Ascending aorta (tissue), 2 donors: ENCODE measurements at regions of chr3 and their contacts with region 1.

Region 1: DNA sequence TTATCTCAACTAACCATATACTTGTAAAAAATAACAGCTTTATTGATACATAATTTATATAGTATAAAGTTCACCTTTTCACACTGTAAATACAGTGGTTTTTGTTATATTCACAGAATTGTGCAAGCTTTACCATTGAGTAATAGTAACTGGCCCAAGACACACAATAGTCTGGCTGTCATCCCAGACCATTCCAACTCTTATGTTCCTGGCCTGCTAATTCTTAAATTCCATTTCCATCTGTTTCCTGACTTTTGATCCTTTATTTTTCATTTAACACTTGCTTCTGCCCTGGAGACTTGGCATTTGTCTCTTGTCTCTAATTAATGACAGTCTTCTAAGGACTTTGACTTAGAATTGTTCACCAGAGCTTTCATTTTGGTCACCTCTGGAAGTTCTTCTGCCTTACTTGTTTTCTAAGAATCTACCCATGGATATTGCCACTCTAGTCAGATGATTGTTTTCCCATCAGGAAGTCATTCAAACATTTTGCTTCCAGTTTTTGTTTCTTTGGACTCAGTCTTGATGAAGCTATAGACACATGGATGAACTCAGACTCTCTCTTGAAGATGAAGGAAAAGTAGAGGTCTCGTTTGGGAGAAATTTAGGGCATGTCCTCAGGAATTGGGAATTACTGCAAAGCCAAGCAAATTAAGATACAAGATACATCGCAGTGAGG is 27.2 kb upstream of the PLSCR4 start:
- DNase-seq: peak in 1 of 2 donors; percentile 66
- H3K4me3 ChIP-seq: no peak overlapping the region
- H3K27ac ChIP-seq: peak overlapping the region; percentile 78 to 82
- H3K4me1 ChIP-seq: peaks cover 9 to 58% of the 10 kb centered on the region in 2 donors
- H3K27me3 ChIP-seq: no peaks in the 10 kb centered on the region
- CTCF ChIP-seq: no peak

Region 2: GRCh38 chr3:146241523-146242240 is 36.4 kb before region 1 on chr3:
- intact Hi-C with region 1: loop called (anchors 5 kb)
- DNase-seq: peak; percentile 45 to 83
- H3K4me3 ChIP-seq: peak overlapping the region; percentile 16 to 27
- H3K27ac ChIP-seq: peak overlapping the region; percentile 90 to 93
- H3K4me1 ChIP-seq: peaks cover 0 to 7% of the 10 kb centered on the region in 2 donors
- H3K27me3 ChIP-seq: no peaks in the 10 kb centered on the region
- CTCF ChIP-seq: no peak

Region 3: DNA sequence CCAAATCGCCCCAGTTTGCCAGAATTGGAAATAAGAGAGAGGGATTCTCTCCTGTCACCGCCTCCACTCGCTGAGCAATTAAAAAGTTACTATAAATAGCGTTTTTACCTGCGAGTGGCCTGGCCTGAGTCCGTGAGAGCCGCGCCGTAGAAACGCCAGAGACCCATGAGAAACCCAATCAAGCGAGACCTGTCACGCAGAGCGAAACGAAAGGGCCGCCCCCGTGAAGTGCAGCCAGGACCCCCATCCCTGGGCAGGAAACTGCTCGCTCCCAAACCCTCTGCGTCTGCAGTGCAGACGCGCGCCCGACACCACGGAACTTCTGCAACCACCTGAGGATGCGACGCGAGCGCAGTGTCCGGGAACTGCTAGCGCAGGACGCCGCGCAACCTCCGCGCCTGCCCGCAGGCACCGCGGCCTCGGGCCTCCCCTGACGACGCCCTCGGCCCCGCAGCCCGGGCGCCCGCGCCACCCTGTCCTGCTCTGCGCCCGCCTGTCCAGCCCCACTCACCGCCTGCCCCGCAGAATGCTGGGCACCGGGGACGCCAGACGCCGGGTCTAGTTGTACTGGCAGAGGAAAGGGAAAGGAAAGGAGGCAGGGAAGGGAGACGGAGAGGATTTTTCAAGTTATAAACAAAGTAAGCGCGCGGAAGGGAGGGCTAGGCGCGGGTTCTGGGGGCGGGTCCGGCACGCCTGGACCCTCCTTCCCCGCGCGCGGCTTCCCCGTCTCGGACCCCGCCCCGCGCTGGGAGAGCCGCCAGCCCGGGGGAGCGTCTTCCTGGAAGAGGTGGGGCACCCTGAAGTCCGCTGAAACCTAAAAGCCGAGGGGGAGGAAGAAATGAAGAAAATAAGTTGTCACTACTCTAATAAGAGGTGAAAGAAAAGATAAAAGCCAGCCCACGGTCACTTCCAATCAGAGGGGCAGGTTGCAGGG is 27.4 kb before region 1 on chr3 and contains the start of gene PLSCR4:
- intact Hi-C with region 1: loop called (anchors 2 kb)
- DNase-seq: peak in 1 of 2 donors; percentile 89
- H3K4me3 ChIP-seq: peak within 1 kb of the TSS; percentile 89 to 97
- H3K27ac ChIP-seq: peak within 1 kb of the TSS; percentile 96 to 100
- H3K4me1 ChIP-seq: peaks cover 0 to 5% of the 10 kb centered on the region in 2 donors
- H3K27me3 ChIP-seq: no peaks in the 10 kb centered on the region
- CTCF ChIP-seq: no peak
- total RNA-seq, gene PLSCR4: 87.2 TPM

Region 4: GRCh38 chr3:146313411-146314111 is 35.5 kb after region 1 on chr3:
- intact Hi-C with region 1: loop called (anchors 2 kb)
- DNase-seq: no peak
- H3K4me3 ChIP-seq: no peak overlapping the region
- H3K27ac ChIP-seq: peak overlapping the region; percentile 37 to 41
- H3K4me1 ChIP-seq: peaks cover 0 to 18% of the 10 kb centered on the region in 2 donors
- H3K27me3 ChIP-seq: no peaks in the 10 kb centered on the region
- CTCF ChIP-seq: no peak